CD8-positive, alpha-beta memory T cell (primary cell): ENCODE measurements at regions of chr7 and their contacts with region 1.

Region 1: DNA sequence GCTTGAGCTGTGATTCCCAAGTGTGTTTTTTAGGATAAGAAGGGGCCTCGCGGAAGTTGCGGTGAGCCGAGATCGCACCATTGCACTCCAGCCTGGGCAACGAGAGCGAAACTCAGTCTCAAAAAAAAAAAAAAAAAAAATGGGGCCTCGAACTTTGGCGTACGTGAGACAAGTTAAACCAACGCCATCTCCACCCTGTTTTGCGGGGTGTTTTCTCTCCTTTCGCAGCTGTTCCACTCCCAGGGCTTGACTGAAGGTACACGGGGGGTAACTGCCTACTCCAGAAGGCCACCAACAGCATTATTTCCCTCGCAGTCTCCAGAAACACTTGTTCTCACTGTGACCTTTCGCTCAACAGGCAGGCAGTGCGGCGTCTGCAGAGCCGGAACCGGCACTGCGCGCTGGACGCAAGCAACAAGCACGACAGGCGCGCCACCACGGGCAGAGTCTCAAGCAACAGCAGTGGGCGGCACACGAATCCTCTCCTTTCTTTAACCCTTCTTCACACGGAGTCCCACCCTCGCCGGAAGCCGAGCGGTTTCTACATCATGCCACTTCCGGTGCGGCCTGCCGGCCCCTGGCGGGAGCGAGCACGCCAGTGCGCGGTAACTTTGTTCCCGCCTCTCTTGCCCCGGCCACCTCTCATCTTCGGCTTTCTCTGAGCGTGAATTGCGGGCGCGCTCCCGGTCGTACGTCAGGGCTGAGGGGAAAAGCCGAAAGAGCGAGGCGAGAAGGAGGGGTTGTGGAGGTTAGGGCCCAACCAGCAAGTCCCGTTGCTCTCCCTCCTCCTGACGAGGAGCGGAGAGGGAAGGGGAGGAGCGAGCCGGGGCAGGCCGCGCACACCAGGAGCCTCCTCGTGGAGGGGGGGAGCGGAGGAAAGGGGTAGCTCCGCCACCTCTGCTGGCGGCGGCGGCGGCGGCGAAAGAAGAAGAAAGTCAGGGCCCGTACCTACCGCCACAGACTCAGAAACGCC is 814 bp upstream of the CDK13 start:
- DNase-seq: peak; percentile 94 to 99 (median 99)
- H3K4me3 ChIP-seq: peak overlapping the region; percentile 85
- H3K4me3 Mint-ChIP-seq: peak overlapping the region; percentile 88 to 99 (median 98)
- H3K27ac ChIP-seq: peak overlapping the region; percentile 93
- H3K27ac Mint-ChIP-seq: peak overlapping the region; percentile 97 to 100 (median 100)
- H3K4me1 ChIP-seq: peaks cover 23% of the 10 kb centered on the region
- H3K4me1 Mint-ChIP-seq: peaks cover 37 to 50% (median 47%) of the 10 kb centered on the region in 3 donors
- H3K27me3 ChIP-seq: no peaks in the 10 kb centered on the region
- H3K27me3 Mint-ChIP-seq: peaks cover 0 to 6% of the 10 kb centered on the region in 2 donors

Region 2: DNA sequence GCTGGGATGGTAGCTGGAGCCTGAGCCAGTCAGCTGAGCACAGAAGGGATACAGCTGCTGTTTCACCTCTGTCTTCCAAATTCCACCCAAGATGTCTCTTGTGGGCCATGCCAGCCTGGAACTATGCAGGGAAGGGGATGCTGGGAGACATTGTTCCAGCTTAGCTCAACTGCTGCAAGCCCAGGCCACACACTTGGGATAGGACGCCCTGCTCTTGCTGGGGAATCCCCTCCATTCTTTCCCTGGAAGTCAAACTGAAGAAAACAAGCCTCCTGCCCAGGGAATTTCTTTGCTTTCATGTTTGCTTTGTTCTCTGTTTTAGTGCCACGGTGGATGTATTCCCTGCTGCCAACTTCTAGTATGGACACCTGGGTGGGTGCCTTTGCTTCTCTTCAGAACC is 54.3 kb before region 1 on chr7:
- CTCF ChIA-PET with region 1: interaction called, 25 read pairs
- POLR2A ChIA-PET with region 1: interaction called, 3 read pairs
- DNase-seq: no peak
- H3K4me3 ChIP-seq: no peak overlapping the region
- H3K4me3 Mint-ChIP-seq: no peak overlapping the region
- H3K27ac ChIP-seq: no peak overlapping the region
- H3K27ac Mint-ChIP-seq: peak overlapping the region in 1 of 8 donors; percentile 65
- H3K4me1 ChIP-seq: no peaks in the 10 kb centered on the region
- H3K4me1 Mint-ChIP-seq: no peaks in the 10 kb centered on the region
- H3K27me3 ChIP-seq: peaks cover 4% of the 10 kb centered on the region
- H3K27me3 Mint-ChIP-seq: peaks cover 2 to 9% of the 10 kb centered on the region in 2 donors

Region 3: GRCh38 chr7:39934132-39934531 is 15.1 kb before region 1 on chr7:
- CTCF ChIA-PET with region 1: no interaction called
- POLR2A ChIA-PET with region 1: no interaction called
- DNase-seq: no peak
- H3K4me3 ChIP-seq: no peak overlapping the region
- H3K4me3 Mint-ChIP-seq: no peak overlapping the region
- H3K27ac ChIP-seq: no peak overlapping the region
- H3K27ac Mint-ChIP-seq: no peak overlapping the region
- H3K4me1 ChIP-seq: no peaks in the 10 kb centered on the region
- H3K4me1 Mint-ChIP-seq: no peaks in the 10 kb centered on the region
- H3K27me3 ChIP-seq: no peaks in the 10 kb centered on the region
- H3K27me3 Mint-ChIP-seq: peaks cover 0 to 8% of the 10 kb centered on the region in 2 donors

Region 4: GRCh38 chr7:40000734-40001315 is 51.6 kb after region 1 on chr7:
- CTCF ChIA-PET with region 1: interaction called, 14 read pairs
- POLR2A ChIA-PET with region 1: no interaction called
- DNase-seq: no peak
- H3K4me3 ChIP-seq: no peak overlapping the region
- H3K4me3 Mint-ChIP-seq: no peak overlapping the region
- H3K27ac ChIP-seq: no peak overlapping the region
- H3K27ac Mint-ChIP-seq: peak overlapping the region in 1 of 8 donors; percentile 30
- H3K4me1 ChIP-seq: no peaks in the 10 kb centered on the region
- H3K4me1 Mint-ChIP-seq: peaks cover 9 to 29% (median 23%) of the 10 kb centered on the region in 3 donors
- H3K27me3 ChIP-seq: no peaks in the 10 kb centered on the region
- H3K27me3 Mint-ChIP-seq: no peaks in the 10 kb centered on the region

Region 5: GRCh38 chr7:40057292-40057691 is 108.0 kb after region 1 on chr7:
- CTCF ChIA-PET with region 1: interaction called, 45 read pairs
- POLR2A ChIA-PET with region 1: interaction called, 3 read pairs
- DNase-seq: no peak
- H3K4me3 ChIP-seq: no peak overlapping the region
- H3K4me3 Mint-ChIP-seq: no peak overlapping the region
- H3K27ac ChIP-seq: no peak overlapping the region
- H3K27ac Mint-ChIP-seq: peak overlapping the region in 4 of 8 donors; percentile 25 to 53 (median 41)
- H3K4me1 ChIP-seq: no peaks in the 10 kb centered on the region
- H3K4me1 Mint-ChIP-seq: peaks cover 12 to 26% (median 17%) of the 10 kb centered on the region in 3 donors
- H3K27me3 ChIP-seq: no peaks in the 10 kb centered on the region
- H3K27me3 Mint-ChIP-seq: no peaks in the 10 kb centered on the region

Region 6: GRCh38 chr7:40134428-40135316 is 185.4 kb after region 1 on chr7 and contains the starts of genes MPLKIP and SUGCT:
- CTCF ChIA-PET with region 1: interaction called, 13 read pairs
- POLR2A ChIA-PET with region 1: interaction called, 14 read pairs
- DNase-seq: peak; percentile 78 to 92 (median 88)
- H3K4me3 ChIP-seq: peak within 1 kb of the TSS; percentile 84
- H3K4me3 Mint-ChIP-seq: peak within 1 kb of the TSS; percentile 96 to 99 (median 98)
- H3K27ac ChIP-seq: peak within 1 kb of the TSS; percentile 96
- H3K27ac Mint-ChIP-seq: peak within 1 kb of the TSS; percentile 88 to 99 (median 98)
- H3K4me1 ChIP-seq: peaks cover 37% of the 10 kb centered on the region
- H3K4me1 Mint-ChIP-seq: peaks cover 27 to 50% (median 41%) of the 10 kb centered on the region in 3 donors
- H3K27me3 ChIP-seq: no peaks in the 10 kb centered on the region
- H3K27me3 Mint-ChIP-seq: peaks cover 0 to 2% of the 10 kb centered on the region in 2 donors
- total RNA-seq, gene MPLKIP: 33.4 to 33.5 TPM
- total RNA-seq, gene SUGCT: 1.3 to 1.4 TPM